ENCODE measurements at regions of chr17 and their contacts with region 1.

Region 1: DNA sequence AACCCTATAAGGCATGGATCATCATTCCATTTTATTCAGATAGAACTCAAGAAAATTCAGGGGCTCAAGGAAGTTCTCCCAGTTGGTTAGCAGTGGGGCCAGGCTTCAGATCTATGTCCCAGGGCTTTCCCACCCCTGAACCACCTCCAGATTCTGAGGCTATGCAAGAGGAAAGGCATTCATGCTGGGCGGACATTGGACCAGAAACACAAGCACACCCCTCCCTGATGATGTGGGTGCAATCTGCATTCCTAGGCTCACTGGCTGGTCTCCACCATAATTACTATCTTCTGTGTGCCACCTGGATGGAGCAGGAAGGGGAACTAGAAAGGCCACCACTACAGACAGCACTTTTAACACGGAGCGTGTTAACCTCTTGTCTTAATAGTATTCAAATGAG is 63.2 kb upstream of the ASIC2 start:
- DNase-seq: no peak
- H3K4me3 ChIP-seq: no peak overlapping the region
- H3K27ac ChIP-seq: no peak overlapping the region
- H3K4me1 ChIP-seq: no peaks in the 10 kb centered on the region
- H3K27me3 ChIP-seq: no peaks in the 10 kb centered on the region
- CTCF ChIP-seq: no peak
- EP300 ChIP-seq: no peak
- POLR2A ChIP-seq: no peak

Region 2: GRCh38 chr17:33302394-33302793 is 53.9 kb before region 1 on chr17:
- intact Hi-C with region 1: loop called (anchors 5 kb)
- DNase-seq: no peak
- H3K4me3 ChIP-seq: no peak overlapping the region
- H3K27ac ChIP-seq: no peak overlapping the region
- H3K4me1 ChIP-seq: no peaks in the 10 kb centered on the region
- H3K27me3 ChIP-seq: peaks cover 0 to 10% (median 0%) of the 10 kb centered on the region in 3 donors
- CTCF ChIP-seq: no peak
- EP300 ChIP-seq: no peak
- POLR2A ChIP-seq: no peak